Calu3 (cell line): ENCODE measurements at regions of chr16 and their contacts with region 1.

Region 1: DNA sequence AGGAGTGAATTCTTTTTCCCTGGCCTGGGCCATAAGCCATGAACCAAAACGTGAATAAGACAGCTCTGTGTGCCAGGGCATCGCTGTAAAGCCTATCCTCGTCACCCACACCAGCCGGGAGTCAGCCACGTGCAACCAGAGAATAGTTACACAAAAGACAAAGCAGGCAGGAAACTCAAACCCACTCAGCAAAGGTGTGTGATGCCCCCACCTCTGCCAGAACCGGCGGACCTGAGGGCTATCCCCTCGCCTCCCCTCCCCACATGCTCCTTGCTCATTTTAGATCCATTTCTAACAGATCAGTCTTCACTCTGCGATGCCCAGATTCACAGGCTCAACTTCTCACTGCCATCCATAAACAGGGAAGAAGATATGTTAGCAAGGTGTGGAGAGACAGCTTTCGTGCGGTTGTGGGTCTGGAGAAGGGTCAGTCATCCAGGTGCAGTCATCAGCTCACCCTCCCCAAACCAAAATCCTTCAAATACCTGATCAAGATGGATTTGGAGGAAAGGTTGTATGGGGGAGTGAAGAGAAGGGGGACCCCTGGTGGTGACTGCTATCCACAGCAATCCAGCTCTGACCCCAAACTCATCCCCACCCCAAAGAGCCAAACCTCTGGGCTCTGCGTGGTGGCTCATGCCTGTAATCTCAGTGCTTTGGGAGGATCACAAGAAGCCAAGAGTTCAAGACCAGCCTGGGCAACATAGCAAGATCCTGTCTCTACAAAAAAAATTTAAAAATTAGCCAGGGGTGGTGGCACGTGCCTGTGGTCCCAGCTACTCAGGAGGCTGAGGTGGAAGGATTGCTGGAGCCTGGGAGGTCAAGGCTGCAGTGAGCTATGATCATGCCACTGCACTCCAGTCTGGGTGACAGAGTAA is 219.2 kb downstream of the C16orf78 start:
- DNase-seq: peak; percentile 43
- H3K4me3 Mint-ChIP-seq: no peak overlapping the region
- H3K27ac Mint-ChIP-seq: no peak overlapping the region
- H3K4me1 Mint-ChIP-seq: no peaks in the 10 kb centered on the region
- H3K27me3 Mint-ChIP-seq: peaks cover 79% of the 10 kb centered on the region
- CTCF ChIP-seq: peak; percentile 84

Region 2: GRCh38 chr16:49407873-49408550 is 184.8 kb before region 1 on chr16:
- CTCF ChIA-PET with region 1: interaction called, 7 read pairs
- intact Hi-C with region 1: loop called (anchors 1 kb)
- DNase-seq: peak; percentile 88
- H3K4me3 Mint-ChIP-seq: no peak overlapping the region
- H3K27ac Mint-ChIP-seq: no peak overlapping the region
- H3K4me1 Mint-ChIP-seq: no peaks in the 10 kb centered on the region
- H3K27me3 Mint-ChIP-seq: peaks cover 39% of the 10 kb centered on the region
- CTCF ChIP-seq: peak; percentile 85

Region 3: GRCh38 chr16:49452578-49452977 is 140.2 kb before region 1 on chr16:
- CTCF ChIA-PET with region 1: interaction called, 10 read pairs
- intact Hi-C with region 1: no loop called
- DNase-seq: no peak
- H3K4me3 Mint-ChIP-seq: no peak overlapping the region
- H3K27ac Mint-ChIP-seq: no peak overlapping the region
- H3K4me1 Mint-ChIP-seq: no peaks in the 10 kb centered on the region
- H3K27me3 Mint-ChIP-seq: peaks cover 60% of the 10 kb centered on the region
- CTCF ChIP-seq: no peak

Region 4: DNA sequence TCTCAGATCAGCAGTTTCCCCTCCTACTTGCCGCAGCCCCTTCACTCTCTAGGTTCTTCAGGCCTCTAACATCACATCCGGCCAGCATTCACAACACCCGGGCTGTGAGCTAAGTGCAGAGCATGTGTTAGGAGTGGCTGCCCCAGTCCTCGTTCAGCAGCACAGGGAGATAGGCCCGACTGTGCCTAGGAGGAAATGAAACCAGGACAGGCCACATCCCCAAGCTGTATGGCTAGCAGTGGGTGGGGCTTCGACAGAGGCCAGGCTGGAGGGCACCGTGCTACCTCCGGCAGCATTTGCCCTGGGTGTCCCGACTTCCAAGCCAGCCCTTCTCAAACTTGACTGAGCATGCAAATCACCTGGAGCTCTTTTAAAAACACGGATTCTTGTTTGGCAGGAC is 17.4 kb before region 1 on chr16:
- CTCF ChIA-PET with region 1: no interaction called
- intact Hi-C with region 1: no loop called
- DNase-seq: no peak
- H3K4me3 Mint-ChIP-seq: no peak overlapping the region
- H3K27ac Mint-ChIP-seq: no peak overlapping the region
- H3K4me1 Mint-ChIP-seq: no peaks in the 10 kb centered on the region
- H3K27me3 Mint-ChIP-seq: peaks cover 82% of the 10 kb centered on the region
- CTCF ChIP-seq: no peak